ENCODE measurements at regions of chr5 and their contacts with region 1.

Region 1: DNA sequence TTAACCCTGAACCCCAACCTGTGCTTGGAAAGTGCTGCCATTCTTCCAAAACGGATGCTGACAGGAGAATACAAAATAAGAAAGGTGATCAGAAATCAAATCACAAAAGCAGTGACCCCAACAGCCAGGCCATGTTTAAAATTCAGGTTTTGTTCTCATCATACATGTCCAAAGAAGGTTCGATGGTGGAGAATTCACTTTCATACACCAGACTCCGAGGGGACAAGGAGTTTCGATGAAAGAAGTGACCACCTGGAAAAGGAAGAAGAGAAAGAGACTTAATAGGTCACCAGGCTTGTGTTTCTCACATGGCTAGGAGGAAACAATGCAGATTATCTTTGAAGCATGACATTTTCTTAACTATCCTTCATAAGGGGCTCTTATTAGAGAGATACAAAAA is 12.5 kb upstream of the TBC1D9B start:
- DNase-seq: no peak
- H3K4me3 ChIP-seq: no peak overlapping the region
- H3K27me3 ChIP-seq: peaks cover 4% of the 10 kb centered on the region
- CTCF ChIP-seq: no peak

Region 2: GRCh38 chr5:179907570-179908324 is 12.4 kb before region 1 on chr5 and contains the start of gene TBC1D9B:
- CTCF ChIA-PET with region 1: interaction called, 12 read pairs
- POLR2A ChIA-PET with region 1: no interaction called
- DNase-seq: no peak
- H3K4me3 ChIP-seq: peak within 1 kb of the TSS; percentile 79
- H3K27me3 ChIP-seq: no peaks in the 10 kb centered on the region
- CTCF ChIP-seq: no peak
- polyA plus RNA-seq, gene TBC1D9B: 53.2 and 89.0 TPM in 2 replicates